ENCODE measurements at regions of chr4 and their contacts with region 1.

Region 1: DNA sequence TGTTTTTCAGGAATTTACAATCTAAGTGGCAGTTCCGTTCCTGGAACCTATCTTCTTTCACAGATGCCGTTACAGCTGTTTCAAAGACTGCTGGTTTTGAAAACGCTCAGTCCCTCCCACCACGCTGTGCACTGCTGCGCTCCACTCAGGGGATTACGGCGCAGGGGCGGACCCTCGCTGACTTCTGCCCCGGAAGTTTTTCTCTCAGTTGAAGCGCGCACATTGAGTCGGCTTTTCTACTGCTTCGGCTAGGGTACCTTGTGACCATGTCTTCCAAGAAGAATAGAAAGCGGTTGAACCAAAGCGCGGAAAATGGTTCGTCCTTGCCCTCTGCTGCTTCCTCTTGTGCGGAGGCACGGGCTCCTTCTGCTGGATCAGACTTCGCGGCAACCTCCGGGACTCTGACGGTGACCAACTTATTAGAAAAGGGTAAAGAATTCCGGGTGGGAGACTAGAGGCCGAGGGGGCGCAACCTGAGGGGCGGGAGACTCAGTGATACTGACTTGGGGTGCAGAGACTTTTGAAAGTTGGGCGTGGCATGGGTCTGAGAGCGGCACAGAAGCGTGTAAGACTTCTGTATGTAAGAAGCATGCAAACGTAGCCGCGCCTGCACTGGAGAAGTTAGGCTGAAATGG is 597 bp upstream of the NUDT6 start:
- DNase-seq: peak; percentile 79 to 89
- ATAC-seq: peak; percentile 95 to 98 (median 98)
- H3K4me3 ChIP-seq: peak overlapping the region; percentile 84
- H3K27ac ChIP-seq: peak overlapping the region; percentile 67
- H3K4me1 ChIP-seq: peaks cover 19% of the 10 kb centered on the region
- H3K27me3 ChIP-seq: no peaks in the 10 kb centered on the region
- CTCF ChIP-seq: no peak

Region 2: GRCh38 chr4:122732329-122733026 is 190.5 kb before region 1 on chr4 and contains the start of gene BBS12:
- intact Hi-C with region 1: loop called in 1 of 2 experiments (anchors 5 kb)
- DNase-seq: peak; percentile 98
- ATAC-seq: peak; percentile 99 to 100 (median 100)
- H3K4me3 ChIP-seq: peak within 1 kb of the TSS; percentile 89
- H3K27ac ChIP-seq: peak within 1 kb of the TSS; percentile 75
- H3K4me1 ChIP-seq: peaks cover 6% of the 10 kb centered on the region
- H3K27me3 ChIP-seq: no peaks in the 10 kb centered on the region
- CTCF ChIP-seq: no peak
- total RNA-seq, gene BBS12: 0.54 to 1.6 (median 1.1) TPM

Region 3: GRCh38 chr4:122842984-122843531 is 79.9 kb before region 1 on chr4:
- intact Hi-C with region 1: no loop called
- DNase-seq: no peak
- ATAC-seq: no peak
- H3K4me3 ChIP-seq: no peak overlapping the region
- H3K27ac ChIP-seq: no peak overlapping the region
- H3K4me1 ChIP-seq: no peaks in the 10 kb centered on the region
- H3K27me3 ChIP-seq: no peaks in the 10 kb centered on the region
- CTCF ChIP-seq: no peak

Region 4: GRCh38 chr4:122992057-122992456 is 69.1 kb after region 1 on chr4:
- intact Hi-C with region 1: no loop called
- DNase-seq: no peak
- ATAC-seq: no peak
- H3K4me3 ChIP-seq: no peak overlapping the region
- H3K27ac ChIP-seq: no peak overlapping the region
- H3K4me1 ChIP-seq: no peaks in the 10 kb centered on the region
- H3K27me3 ChIP-seq: no peaks in the 10 kb centered on the region
- CTCF ChIP-seq: no peak

Region 5: GRCh38 chr4:123007679-123008078 is 84.7 kb after region 1 on chr4:
- intact Hi-C with region 1: no loop called
- DNase-seq: no peak
- ATAC-seq: no peak
- H3K4me3 ChIP-seq: no peak overlapping the region
- H3K27ac ChIP-seq: no peak overlapping the region
- H3K4me1 ChIP-seq: peaks cover 9% of the 10 kb centered on the region
- H3K27me3 ChIP-seq: no peaks in the 10 kb centered on the region
- CTCF ChIP-seq: no peak